ENCODE measurements at regions of chr2 and their contacts with region 1.

Region 1: DNA sequence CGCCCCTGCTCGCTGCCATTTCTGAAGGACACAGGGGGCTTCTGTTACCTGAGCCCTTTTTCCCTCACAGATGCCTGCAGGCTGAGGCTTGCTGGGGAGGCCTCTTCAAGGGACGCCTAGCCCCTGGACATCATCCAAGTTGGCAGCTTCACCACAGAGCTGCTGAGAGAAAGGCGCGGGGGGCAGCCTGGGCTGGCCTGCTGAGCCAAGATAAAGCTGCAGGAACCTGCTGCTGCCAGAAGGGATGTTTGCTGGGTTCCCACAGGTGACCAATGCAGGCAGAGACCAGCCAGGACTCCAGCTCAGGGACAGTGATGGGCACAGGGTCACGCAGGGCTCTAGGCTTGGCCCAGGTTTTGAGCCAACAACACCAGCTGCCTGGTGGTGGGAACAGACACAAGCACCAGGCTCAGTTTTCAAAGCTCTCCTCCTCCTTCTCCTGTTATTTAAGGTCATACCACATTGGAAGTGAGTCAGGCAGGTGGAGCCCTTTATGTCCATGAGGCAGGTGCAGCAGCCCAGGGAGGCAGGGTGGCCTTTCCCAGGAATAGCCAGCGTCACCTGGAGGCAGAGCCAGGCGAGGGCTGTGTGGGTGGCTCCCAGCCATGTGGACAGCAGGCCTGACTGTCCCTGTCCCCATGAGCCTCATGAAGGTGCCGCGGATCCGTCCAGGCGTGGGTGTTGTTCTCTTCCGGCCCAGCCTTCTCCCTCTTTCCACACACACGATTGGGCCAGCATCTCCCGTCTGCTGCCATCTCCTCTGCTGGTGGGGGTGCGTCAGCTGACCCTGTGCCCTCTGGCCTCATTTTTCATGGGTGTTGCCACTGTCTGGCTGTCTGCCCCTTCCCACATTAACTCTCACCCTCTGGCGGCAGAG is 515.5 kb upstream of the MYT1L start:
- DNase-seq: peak; percentile 81
- H3K4me3 ChIP-seq: no peak overlapping the region; a peak in 1 of 4 replicates
- H3K27ac ChIP-seq: peak overlapping the region; percentile 30 to 85; a peak in 3 of 4 replicates
- H3K4me1 ChIP-seq: peaks cover 0 to 70% of the 10 kb centered on the region in 2 experiments; a peak in 2 of 4 replicates
- H3K27me3 ChIP-seq: no peaks in the 10 kb centered on the region
- CTCF ChIP-seq: no peak
- EP300 ChIP-seq: peak in 1 of 2 experiments; percentile 81; a peak in 2 of 4 replicates
- RAD21 ChIP-seq: peak; percentile 44

Region 2: GRCh38 chr2:1854729-1855547 is 991.6 kb before region 1 on chr2:
- CTCF ChIA-PET with region 1: interaction called, 10 read pairs
- POLR2A ChIA-PET with region 1: no interaction called
- DNase-seq: peak; percentile 95
- H3K4me3 ChIP-seq: peak overlapping the region; percentile 46 to 47
- H3K27ac ChIP-seq: peak overlapping the region in 1 of 2 experiments; percentile 55; a peak in 2 of 4 replicates
- H3K4me1 ChIP-seq: peaks cover 3 to 16% of the 10 kb centered on the region in 2 experiments; a peak in 3 of 4 replicates
- H3K27me3 ChIP-seq: peaks cover 30% of the 10 kb centered on the region
- CTCF ChIP-seq: peak; percentile 67
- EP300 ChIP-seq: no peak
- RAD21 ChIP-seq: peak; percentile 95

Region 3: DNA sequence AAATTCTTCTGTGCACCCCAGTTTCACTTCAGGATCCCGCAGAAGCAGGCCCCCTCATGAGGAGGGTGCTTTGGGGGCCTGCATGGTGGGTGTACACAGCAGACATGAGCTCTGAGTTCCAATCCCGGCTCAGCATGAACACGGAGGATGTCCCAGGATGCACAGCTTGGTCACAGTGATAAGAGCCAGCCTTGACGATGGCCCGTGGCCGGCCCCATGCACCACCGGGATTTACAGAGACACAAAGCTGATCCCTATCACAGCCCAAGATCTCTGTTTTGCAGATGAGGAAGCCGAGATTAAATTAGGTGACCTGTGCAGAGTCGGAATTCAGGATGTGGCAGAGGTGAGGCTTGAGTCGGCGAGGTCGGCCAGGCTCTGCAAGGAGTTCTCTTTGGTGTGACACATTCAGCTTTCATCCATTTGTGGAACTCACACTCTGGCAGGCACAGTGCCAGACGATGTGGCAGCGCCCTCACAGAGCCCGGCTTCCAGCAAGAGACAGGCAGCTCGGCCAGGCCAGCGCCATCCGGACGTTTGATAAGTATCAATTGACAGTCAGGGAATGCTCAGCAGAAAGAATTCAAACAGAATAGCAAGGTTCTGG is 59.2 kb before region 1 on chr2:
- CTCF ChIA-PET with region 1: interaction called, 5 read pairs
- POLR2A ChIA-PET with region 1: interaction called, 12 read pairs
- DNase-seq: peak; percentile 86
- H3K4me3 ChIP-seq: no peak overlapping the region; a peak in 1 of 4 replicates
- H3K27ac ChIP-seq: peak overlapping the region in 1 of 2 experiments; percentile 94; a peak in 2 of 4 replicates
- H3K4me1 ChIP-seq: peaks cover 0 to 27% of the 10 kb centered on the region in 2 experiments; a peak in 2 of 4 replicates
- H3K27me3 ChIP-seq: no peaks in the 10 kb centered on the region
- CTCF ChIP-seq: no peak
- EP300 ChIP-seq: peak in 1 of 2 experiments; percentile 33; a peak in 1 of 4 replicates
- RAD21 ChIP-seq: peak; percentile 45; the same call in 1 of the 2 replicates

Region 4: DNA sequence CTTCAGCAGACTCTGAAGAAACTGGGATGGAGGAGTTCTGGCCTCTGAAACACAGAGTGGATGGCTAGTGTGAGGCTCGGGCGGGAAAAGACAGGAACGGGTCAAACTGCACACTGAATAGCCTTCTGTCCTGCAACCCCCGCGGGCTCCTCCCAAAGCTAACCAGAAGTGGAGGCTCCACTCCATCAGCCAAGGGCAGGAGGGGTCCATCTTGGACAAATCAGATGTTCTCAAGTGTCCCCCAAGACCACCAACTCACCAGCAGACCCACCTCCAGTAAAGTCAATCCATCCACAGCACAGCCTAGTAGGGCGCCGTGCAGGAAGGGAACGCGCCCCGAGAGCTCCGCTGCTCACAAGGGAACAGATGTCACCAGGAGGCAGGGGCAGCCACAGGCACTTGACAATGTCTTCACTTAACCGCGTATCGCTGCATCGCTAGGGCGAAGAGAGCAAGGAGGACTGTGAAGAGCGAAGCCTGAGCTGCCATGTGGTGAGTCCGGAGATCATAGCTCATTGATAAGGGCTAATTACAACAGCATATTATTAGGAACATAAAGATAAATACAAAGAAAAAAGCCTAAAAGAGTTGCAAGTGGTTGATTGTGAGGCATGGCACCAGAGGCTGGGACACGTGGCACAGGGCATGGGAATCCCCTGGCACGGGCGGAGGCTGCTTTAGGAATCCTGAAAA is 20.9 kb before region 1 on chr2:
- CTCF ChIA-PET with region 1: no interaction called
- POLR2A ChIA-PET with region 1: no interaction called
- DNase-seq: peak; percentile 23
- H3K4me3 ChIP-seq: no peak overlapping the region
- H3K27ac ChIP-seq: no peak overlapping the region
- H3K4me1 ChIP-seq: peaks cover 0 to 6% of the 10 kb centered on the region in 2 experiments; a peak in 1 of 4 replicates
- H3K27me3 ChIP-seq: no peaks in the 10 kb centered on the region
- CTCF ChIP-seq: no peak
- EP300 ChIP-seq: no peak
- RAD21 ChIP-seq: no peak

Region 5: DNA sequence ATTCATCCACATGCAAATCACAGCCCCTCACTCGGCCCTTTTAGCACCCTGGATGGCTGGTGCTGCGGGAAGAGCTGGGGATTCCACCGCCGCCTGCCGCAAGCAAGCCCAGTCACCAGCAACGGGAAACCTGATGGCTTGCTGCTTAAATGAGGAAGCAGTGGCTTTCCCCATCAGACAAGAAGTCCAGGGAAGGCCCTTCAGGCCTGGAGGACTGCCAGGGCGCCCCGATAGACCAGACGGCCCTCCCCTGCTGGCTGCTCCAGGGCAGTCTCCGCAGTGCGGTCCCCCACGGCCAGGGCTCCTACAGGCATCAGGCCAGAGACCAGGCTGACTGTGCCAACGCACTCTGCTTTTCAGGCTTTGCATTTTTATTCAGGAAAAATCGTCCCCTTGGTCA is 91.9 kb after region 1 on chr2:
- CTCF ChIA-PET with region 1: interaction called, 11 read pairs
- POLR2A ChIA-PET with region 1: no interaction called
- DNase-seq: peak; percentile 95
- H3K4me3 ChIP-seq: no peak overlapping the region
- H3K27ac ChIP-seq: peak overlapping the region in 1 of 2 experiments; percentile 95; a peak in 2 of 4 replicates
- H3K4me1 ChIP-seq: peaks cover 0 to 32% of the 10 kb centered on the region in 2 experiments; a peak in 2 of 4 replicates
- H3K27me3 ChIP-seq: no peaks in the 10 kb centered on the region
- CTCF ChIP-seq: no peak
- EP300 ChIP-seq: peak in 1 of 2 experiments; percentile 83; a peak in 2 of 4 replicates
- RAD21 ChIP-seq: peak; percentile 48

Region 6: GRCh38 chr2:3041841-3042608 is 195.5 kb after region 1 on chr2:
- CTCF ChIA-PET with region 1: no interaction called
- POLR2A ChIA-PET with region 1: interaction called, 10 read pairs
- DNase-seq: peak; percentile 90
- H3K4me3 ChIP-seq: no peak overlapping the region
- H3K27ac ChIP-seq: peak overlapping the region; percentile 18 to 95; a peak in 3 of 4 replicates
- H3K4me1 ChIP-seq: peaks cover 0 to 30% of the 10 kb centered on the region in 2 experiments; a peak in 1 of 4 replicates
- H3K27me3 ChIP-seq: no peaks in the 10 kb centered on the region
- CTCF ChIP-seq: no peak
- EP300 ChIP-seq: no peak
- RAD21 ChIP-seq: no peak

Region 7: DNA sequence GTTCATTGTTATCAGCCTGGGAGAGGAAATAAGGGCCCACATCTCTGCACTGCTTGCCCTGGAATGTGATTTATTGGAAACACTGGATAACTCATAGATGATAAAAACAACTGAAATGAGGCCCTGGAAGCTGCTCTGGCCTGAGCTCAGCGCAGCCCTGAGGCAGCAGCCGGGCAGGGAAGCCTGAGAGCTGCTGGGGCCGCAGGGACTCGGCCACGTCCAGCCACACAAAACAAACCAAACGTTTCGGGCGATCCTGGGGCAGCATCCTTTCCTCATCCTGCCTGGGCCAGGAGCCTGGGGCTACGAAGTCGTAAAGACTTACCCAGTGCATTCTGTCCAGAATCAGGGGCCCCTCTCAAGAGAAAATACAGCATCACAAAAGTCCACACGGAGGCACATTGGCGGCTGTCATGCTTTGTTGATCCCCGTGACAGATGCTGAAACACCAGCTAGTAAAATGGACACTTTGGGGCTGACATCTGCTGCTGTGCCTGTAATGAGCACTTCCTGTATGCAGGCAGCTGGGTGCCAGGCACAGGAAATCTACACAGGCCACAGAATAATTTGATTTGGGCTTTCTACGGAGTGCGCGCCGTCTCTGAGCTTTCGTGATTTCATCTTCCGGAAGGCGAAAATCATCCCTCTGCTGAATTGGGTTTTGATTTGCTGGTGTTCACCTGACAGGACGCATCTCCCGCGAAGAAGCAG is 280.5 kb after region 1 on chr2:
- CTCF ChIA-PET with region 1: interaction called, 4 read pairs
- POLR2A ChIA-PET with region 1: interaction called, 71 read pairs
- DNase-seq: peak; percentile 83
- H3K4me3 ChIP-seq: peak overlapping the region in 1 of 2 experiments; percentile 44; a peak in 2 of 4 replicates
- H3K27ac ChIP-seq: peak overlapping the region; percentile 45 to 100; a peak in 3 of 4 replicates
- H3K4me1 ChIP-seq: peaks cover 0 to 90% of the 10 kb centered on the region in 2 experiments; a peak in 3 of 4 replicates
- H3K27me3 ChIP-seq: no peaks in the 10 kb centered on the region
- CTCF ChIP-seq: no peak
- EP300 ChIP-seq: peak; percentile 36 to 97; a peak in 3 of 4 replicates
- RAD21 ChIP-seq: peak; percentile 39; the same call in 1 of the 2 replicates